ENCODE measurements at regions of chr3 and their contacts with region 1.

Region 1: DNA sequence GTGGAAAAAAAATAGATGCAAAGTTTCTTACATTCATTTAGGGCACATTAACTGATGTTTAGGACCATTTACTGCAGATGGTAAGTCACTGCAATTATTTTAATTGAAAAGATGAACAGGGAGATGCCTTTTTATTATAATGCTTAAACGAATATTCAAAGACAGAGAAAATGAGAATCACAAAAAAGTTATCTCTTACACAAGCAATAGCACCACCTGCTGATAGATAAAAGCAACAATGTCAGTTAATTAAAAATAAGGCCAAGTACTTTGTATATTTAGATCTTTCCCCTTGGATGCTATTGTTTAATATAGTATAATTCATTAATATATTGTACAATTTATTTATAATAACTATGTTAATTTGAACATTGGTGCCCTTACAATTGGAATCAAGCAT is 55.9 kb downstream of the IFT80 start:
- DNase-seq: no peak
- ATAC-seq: peak; percentile 65
- H3K4me3 ChIP-seq: no peak overlapping the region
- H3K27ac ChIP-seq: no peak overlapping the region
- H3K4me1 ChIP-seq: no peaks in the 10 kb centered on the region
- H3K27me3 ChIP-seq: no peaks in the 10 kb centered on the region
- CTCF ChIP-seq: peak in 1 of 2 donors; percentile 41

Region 2: DNA sequence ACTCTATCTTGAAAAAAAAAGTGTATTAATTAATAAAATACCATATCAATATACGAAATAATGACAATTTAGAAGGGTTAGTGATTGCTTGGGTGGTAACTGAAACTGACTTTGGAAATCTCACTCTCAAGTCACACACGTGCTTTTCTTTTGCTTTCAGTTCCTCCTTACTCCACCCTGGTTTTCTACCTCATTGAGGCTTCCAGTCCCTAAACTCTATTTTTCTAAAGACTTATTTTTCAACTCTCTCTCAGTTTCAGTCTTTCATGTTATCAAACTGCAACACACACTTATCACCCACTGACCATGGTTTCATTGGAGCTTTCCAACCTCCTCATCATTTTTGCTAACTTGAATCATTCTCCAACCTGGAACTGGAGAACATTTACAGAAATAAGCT is 331.0 kb before region 1 on chr3:
- intact Hi-C with region 1: no loop called
- DNase-seq: no peak
- ATAC-seq: peak; percentile 44
- H3K4me3 ChIP-seq: no peak overlapping the region
- H3K27ac ChIP-seq: no peak overlapping the region
- H3K4me1 ChIP-seq: no peaks in the 10 kb centered on the region
- H3K27me3 ChIP-seq: no peaks in the 10 kb centered on the region
- CTCF ChIP-seq: no peak

Region 3: GRCh38 chr3:160038862-160039562 is 304.1 kb before region 1 on chr3:
- intact Hi-C with region 1: loop called in 1 of 2 experiments (anchors 10 kb)
- DNase-seq: peak; percentile 18 to 82 (median 54)
- ATAC-seq: peak; percentile 79
- H3K4me3 ChIP-seq: peak overlapping the region; percentile 17 to 19
- H3K27ac ChIP-seq: no peak overlapping the region
- H3K4me1 ChIP-seq: peaks cover 0 to 4% of the 10 kb centered on the region in 2 donors
- H3K27me3 ChIP-seq: peaks cover 5 to 33% of the 10 kb centered on the region in 2 donors
- CTCF ChIP-seq: no peak

Region 4: DNA sequence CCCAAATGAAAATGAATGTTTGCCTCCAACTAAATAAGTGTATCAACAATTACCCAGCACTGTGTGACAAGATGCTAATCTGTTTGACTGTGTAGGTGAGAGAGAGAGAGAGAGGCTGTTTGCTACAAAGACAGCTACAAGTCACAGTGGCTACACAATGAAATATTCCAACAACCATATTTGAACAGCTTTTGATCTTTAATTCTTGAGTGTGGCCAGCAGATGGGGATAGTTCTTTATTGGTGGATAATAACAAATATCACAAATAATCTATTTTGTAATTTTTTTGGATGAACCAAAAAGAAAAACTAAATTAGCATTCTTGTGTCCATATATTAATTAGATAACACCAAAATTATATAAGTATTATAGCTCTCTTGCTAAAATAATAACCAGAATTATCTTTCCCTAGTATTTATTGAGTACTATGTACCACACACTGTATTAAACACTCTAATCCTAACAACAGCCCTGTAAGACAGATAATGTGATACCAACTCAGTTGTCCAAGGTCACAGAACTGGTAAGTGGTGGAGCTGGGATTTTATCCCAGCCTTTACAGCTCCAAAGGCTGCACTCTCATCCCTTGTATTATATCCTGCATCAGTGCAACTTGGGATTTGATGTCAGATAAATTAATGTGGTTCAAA is 179.8 kb before region 1 on chr3:
- intact Hi-C with region 1: loop called in 1 of 2 experiments (anchors 5 kb)
- DNase-seq: peak in 1 of 4 donors; percentile 23
- ATAC-seq: peak; percentile 68
- H3K4me3 ChIP-seq: no peak overlapping the region
- H3K27ac ChIP-seq: no peak overlapping the region
- H3K4me1 ChIP-seq: no peaks in the 10 kb centered on the region
- H3K27me3 ChIP-seq: no peaks in the 10 kb centered on the region
- CTCF ChIP-seq: peak in 1 of 2 donors; percentile 40

Region 5: GRCh38 chr3:160577556-160578195 is 234.5 kb after region 1 on chr3:
- intact Hi-C with region 1: no loop called
- DNase-seq: no peak
- ATAC-seq: peak; percentile 53
- H3K4me3 ChIP-seq: no peak overlapping the region
- H3K27ac ChIP-seq: no peak overlapping the region
- H3K4me1 ChIP-seq: no peaks in the 10 kb centered on the region
- H3K27me3 ChIP-seq: no peaks in the 10 kb centered on the region
- CTCF ChIP-seq: no peak